CD14-positive monocyte (primary cell): ENCODE measurements at regions of chr11 and their contacts with region 1.

Region 1: DNA sequence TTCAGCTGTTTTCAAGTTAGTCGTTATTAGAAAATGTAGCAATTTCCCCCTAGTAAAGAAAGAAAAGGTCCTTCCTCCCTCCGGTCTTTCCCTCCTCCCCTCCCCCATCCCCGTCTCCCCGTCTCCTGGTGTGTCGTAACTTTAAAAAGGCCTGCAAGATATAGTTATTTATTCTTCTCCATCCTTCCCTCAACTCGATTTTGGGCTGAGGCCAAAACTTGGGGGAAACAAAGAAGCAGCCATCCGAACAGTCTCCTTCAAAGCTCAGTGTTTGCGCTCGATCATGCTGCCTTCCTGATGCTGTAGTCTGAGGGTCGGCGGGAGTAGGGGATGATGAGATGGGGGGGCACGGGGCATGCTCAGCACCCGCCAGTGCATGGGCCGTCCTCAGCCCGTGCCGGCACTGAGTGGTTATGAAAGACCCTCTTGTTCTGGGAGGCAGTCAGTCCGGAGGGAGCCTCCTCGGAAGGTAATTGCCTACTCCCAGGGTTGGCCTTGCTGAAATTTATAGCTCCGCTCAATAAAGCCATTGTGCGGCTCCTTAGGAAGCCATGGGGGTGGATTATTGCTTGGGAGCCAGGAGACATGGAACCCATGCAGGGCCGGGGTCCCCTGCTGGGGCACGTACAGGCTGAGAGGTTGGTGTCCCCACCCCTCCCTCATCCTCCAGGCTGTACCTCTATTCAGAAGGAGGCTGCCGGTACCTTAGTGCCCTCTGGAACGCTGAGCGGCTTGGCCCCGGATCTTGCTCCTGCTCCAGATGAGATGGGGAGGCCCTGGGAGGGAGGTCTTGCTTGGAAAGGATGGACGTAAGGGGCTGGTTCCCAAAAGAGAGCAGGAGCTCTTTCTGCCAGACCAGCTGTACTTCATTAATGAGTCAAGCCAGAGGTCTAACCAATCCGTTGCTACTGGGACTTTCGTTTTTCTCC is 212.7 kb upstream of the CADM1 start:
- DNase-seq: peak; percentile 39 to 54 (median 43)
- H3K4me3 ChIP-seq: peak overlapping the region in 1 of 3 experiments; percentile 56
- H3K4me3 Mint-ChIP-seq: peak overlapping the region; percentile 4 to 83
- H3K27ac ChIP-seq: peak overlapping the region in 1 of 2 donors; percentile 55
- H3K27ac Mint-ChIP-seq: peak overlapping the region in 5 of 7 donors; percentile 26 to 52 (median 31)
- H3K4me1 ChIP-seq: peaks cover 32 to 39% of the 10 kb centered on the region in 2 donors
- H3K4me1 Mint-ChIP-seq: peaks cover 42% of the 10 kb centered on the region
- H3K27me3 ChIP-seq: peaks cover 0 to 10% of the 10 kb centered on the region in 2 donors
- H3K27me3 Mint-ChIP-seq: peaks cover 8 to 29% (median 24%) of the 10 kb centered on the region in 3 donors
- CTCF ChIP-seq: no peak

Region 2: DNA sequence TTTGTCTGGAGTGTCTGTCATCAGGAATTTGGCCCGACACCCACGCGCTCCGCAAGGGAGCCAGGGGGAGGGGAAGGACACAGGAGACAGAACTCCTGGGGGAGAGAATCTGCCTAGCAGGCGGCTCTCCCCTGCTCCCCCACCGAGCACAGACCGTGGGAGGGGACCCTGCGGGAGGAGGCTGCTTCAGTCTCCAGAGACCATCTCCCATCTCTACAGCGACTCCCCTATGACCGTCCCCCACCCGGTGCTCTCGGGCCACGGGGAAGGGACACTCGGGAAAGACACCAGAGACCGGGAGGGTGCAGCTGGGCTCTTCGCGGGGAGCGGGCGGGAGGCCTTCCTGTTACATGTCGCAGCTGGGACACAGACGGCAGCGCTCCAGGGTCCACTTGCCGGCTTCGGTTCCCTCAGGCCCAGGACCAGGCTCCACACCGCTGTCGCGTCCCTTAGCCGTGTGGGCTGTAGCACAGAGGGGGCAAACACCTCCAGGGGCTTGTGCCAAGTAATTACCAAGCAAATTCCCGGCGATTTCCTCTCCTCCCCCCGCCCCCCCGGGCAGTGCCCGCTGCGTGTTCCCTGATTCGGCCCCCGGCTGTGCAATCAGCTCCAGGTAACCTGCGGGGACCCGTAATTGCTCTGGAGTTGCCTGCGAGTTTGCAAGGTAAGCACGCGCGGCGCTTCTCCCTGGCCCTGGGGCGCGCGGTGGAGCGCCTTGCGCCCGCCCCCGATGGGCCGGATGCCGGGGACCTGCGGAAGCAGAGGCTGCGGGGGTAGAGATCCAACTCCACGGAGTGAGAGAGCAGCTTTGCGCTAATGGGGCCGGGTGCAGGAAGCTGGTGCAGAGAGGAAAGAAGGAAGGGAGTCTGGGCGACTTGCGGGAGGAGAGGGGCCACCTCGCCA is 57.6 kb before region 1 on chr11:
- intact Hi-C with region 1: no loop called
- DNase-seq: no peak
- H3K4me3 ChIP-seq: peak overlapping the region in 1 of 3 experiments; percentile 53
- H3K4me3 Mint-ChIP-seq: peak overlapping the region in 1 of 2 donors; percentile 82
- H3K27ac ChIP-seq: no peak overlapping the region
- H3K27ac Mint-ChIP-seq: no peak overlapping the region
- H3K4me1 ChIP-seq: peaks cover 4 to 12% of the 10 kb centered on the region in 2 donors
- H3K4me1 Mint-ChIP-seq: peaks cover 13% of the 10 kb centered on the region
- H3K27me3 ChIP-seq: peaks cover 47 to 74% of the 10 kb centered on the region in 2 donors
- H3K27me3 Mint-ChIP-seq: peaks cover 71 to 83% (median 72%) of the 10 kb centered on the region in 3 donors
- CTCF ChIP-seq: no peak

Region 3: DNA sequence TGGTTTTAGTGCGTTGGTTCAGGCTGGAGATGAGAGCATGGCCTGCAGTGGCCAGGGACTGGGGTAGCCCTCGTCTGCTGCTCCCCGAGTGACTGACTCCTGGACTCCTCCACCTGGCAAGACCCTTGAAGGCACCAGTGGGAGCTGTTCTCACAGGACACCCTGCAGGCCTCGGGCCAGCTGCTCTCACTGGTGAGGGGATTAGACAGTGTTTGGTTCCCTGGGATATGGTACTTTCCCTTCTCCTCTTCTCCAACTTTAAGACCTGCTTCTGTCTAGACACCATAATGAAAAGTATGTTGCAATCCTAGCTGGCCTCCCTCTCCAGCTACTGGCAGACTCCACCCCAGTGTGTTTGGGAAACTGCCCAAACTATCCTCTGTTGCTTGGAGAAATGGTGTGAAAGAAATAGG is 43.9 kb before region 1 on chr11:
- intact Hi-C with region 1: loop called in 1 of 2 experiments (anchors 10 kb)
- DNase-seq: no peak
- H3K4me3 ChIP-seq: no peak overlapping the region
- H3K4me3 Mint-ChIP-seq: no peak overlapping the region
- H3K27ac ChIP-seq: no peak overlapping the region
- H3K27ac Mint-ChIP-seq: peak overlapping the region in 1 of 7 donors; percentile 76
- H3K4me1 ChIP-seq: peaks cover 4 to 9% of the 10 kb centered on the region in 2 donors
- H3K4me1 Mint-ChIP-seq: peaks cover 11% of the 10 kb centered on the region
- H3K27me3 ChIP-seq: peaks cover 0 to 9% of the 10 kb centered on the region in 2 donors
- H3K27me3 Mint-ChIP-seq: peaks cover 4 to 6% (median 6%) of the 10 kb centered on the region in 3 donors
- CTCF ChIP-seq: no peak

Region 4: GRCh38 chr11:115784796-115785521 is 68.1 kb after region 1 on chr11:
- intact Hi-C with region 1: no loop called
- DNase-seq: no peak
- H3K4me3 ChIP-seq: no peak overlapping the region
- H3K4me3 Mint-ChIP-seq: no peak overlapping the region
- H3K27ac ChIP-seq: no peak overlapping the region
- H3K27ac Mint-ChIP-seq: no peak overlapping the region
- H3K4me1 ChIP-seq: no peaks in the 10 kb centered on the region
- H3K4me1 Mint-ChIP-seq: no peaks in the 10 kb centered on the region
- H3K27me3 ChIP-seq: peaks cover 0 to 5% of the 10 kb centered on the region in 2 donors
- H3K27me3 Mint-ChIP-seq: peaks cover 6 to 9% (median 8%) of the 10 kb centered on the region in 3 donors
- CTCF ChIP-seq: no peak